ENCODE measurements at regions of chr17 and their contacts with region 1.

Region 1: GRCh38 chr17:27236717-27237315 is 57.1 kb upstream of the WSB1 start:
- DNase-seq: peak; percentile 90
- H3K4me3 Mint-ChIP-seq: no peak overlapping the region
- H3K27ac Mint-ChIP-seq: no peak overlapping the region
- H3K4me1 Mint-ChIP-seq: peaks cover 13% of the 10 kb centered on the region
- H3K27me3 Mint-ChIP-seq: no peaks in the 10 kb centered on the region

Region 2: DNA sequence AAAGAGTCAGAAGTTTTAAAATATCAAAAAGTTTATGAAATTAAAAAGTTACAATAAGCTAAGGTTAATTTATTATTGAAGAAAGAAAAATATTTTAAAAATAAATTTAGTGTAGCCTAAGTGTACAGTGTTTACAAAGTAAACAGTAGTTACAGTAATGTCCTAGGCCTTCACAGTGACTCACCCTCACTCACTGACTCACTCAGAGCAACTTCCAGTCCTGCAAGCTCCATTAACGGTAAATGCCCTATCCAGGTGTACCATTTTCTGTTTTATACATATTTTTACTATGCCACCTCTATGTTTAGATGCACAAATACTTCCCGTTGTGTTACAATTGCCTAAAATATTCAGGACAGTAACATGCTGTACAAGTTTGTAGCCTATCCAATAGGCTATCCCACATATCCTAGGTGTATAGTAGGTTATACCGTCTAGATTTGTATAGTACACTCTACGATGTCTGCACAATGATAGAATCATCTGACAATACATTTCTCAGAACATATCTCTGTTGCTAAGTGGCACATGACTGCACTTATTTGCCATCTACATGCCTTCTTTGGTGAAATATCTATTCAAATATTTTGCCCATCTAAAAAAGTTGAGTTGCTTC is 10.1 kb before region 1 on chr17:
- CTCF ChIA-PET with region 1: interaction called, 15 read pairs
- intact Hi-C with region 1: no loop called
- DNase-seq: no peak
- H3K4me3 Mint-ChIP-seq: no peak overlapping the region
- H3K27ac Mint-ChIP-seq: no peak overlapping the region
- H3K4me1 Mint-ChIP-seq: no peaks in the 10 kb centered on the region
- H3K27me3 Mint-ChIP-seq: no peaks in the 10 kb centered on the region

Region 3: DNA sequence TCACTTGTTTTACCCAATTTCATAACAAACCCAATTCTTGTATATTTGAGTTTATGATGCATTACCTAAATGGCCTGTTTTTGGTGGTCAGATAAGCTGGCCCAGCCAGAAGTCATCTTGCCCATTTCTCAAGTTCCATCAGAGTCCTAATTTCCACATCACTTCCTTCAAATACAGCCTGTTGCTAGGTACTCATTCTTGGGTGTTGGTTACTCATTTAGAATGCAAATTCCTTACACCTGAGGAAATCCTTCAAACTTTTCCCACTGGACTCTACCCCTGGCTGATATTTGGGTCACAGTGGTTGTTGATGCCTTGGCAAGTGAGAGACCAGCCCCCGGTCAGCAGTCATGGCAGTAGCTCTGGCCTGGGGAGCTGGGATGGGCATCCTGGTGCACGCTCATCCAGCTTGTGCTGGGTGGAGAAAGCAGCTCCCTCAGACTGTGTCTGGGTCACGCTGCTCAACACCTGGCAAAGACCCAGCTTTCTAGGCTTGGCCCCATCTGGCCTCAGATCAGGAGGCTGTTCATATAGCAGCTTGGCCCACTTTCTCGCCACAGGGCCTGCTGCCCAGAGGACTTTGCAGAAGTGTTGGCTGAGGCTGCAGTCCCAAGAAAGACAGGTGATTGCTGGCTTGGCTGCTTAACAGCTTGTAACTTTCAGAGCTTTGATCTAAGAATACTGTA is 82.9 kb after region 1 on chr17:
- CTCF ChIA-PET with region 1: interaction called, 10 read pairs
- intact Hi-C with region 1: no loop called
- DNase-seq: no peak
- H3K4me3 Mint-ChIP-seq: no peak overlapping the region
- H3K27ac Mint-ChIP-seq: no peak overlapping the region
- H3K4me1 Mint-ChIP-seq: no peaks in the 10 kb centered on the region
- H3K27me3 Mint-ChIP-seq: no peaks in the 10 kb centered on the region

Region 4: DNA sequence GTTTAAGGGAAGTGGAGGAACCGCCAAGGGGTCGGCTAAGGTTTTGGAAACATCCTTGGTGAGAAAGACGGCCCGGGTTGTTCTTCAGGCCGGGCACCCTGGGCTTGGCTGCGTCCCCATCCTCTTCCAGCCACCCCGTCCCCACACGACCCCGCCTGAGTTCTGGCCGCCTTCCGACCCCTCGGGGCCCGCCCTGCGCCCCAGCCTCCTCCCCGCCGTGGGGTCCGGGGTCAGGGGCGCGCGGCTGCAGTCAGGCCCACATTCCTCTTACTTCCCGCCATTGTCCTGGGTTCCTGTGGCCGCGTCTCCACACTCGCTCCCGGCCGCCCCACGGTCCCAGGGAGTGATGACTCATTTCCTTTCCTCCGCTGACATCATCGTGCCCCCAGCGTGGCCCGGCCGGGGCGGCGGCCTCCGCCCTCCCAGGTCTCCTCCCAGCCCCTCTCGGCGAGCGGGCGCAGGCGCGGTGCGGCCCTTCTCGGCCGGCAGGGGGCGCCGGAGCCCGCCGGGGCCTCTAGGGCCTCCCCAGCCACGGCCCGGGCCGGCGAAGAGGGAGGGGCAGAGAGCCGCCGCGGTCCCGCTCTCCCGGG is 116.7 kb after region 1 on chr17:
- CTCF ChIA-PET with region 1: interaction called, 27 read pairs
- intact Hi-C with region 1: loop called (anchors 1 kb)
- DNase-seq: peak; percentile 86
- H3K4me3 Mint-ChIP-seq: peak overlapping the region; percentile 89
- H3K27ac Mint-ChIP-seq: peak overlapping the region; percentile 93
- H3K4me1 Mint-ChIP-seq: peaks cover 23% of the 10 kb centered on the region
- H3K27me3 Mint-ChIP-seq: no peaks in the 10 kb centered on the region

Region 5: DNA sequence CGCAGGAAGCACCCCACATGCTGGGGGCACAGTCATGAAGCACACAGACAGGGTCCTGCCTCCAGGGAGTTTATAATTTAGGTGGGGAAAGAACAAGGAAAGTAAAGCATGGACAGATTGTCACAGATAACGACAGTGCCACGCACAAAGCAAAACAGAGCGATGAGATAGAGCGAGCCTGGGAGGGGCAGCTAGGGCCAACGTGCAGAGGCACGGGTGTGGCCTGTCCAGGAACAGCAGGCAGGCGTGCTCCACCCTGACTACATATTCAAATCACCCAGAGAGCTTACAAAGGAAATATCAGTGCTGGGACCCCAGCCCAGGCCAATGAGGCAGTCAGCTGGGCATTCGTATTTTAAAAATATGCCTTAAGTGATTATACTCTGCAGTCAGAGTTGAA is 410.9 kb after region 1 on chr17:
- CTCF ChIA-PET with region 1: interaction called, 14 read pairs
- intact Hi-C with region 1: loop called (anchors 1 kb)
- DNase-seq: no peak
- H3K4me3 Mint-ChIP-seq: no peak overlapping the region
- H3K27ac Mint-ChIP-seq: no peak overlapping the region
- H3K4me1 Mint-ChIP-seq: no peaks in the 10 kb centered on the region
- H3K27me3 Mint-ChIP-seq: no peaks in the 10 kb centered on the region

Region 6: GRCh38 chr17:27760069-27760885 is 523.5 kb after region 1 on chr17:
- CTCF ChIA-PET with region 1: interaction called, 5 read pairs
- intact Hi-C with region 1: loop called (anchors 5 kb)
- DNase-seq: peak; percentile 83
- H3K4me3 Mint-ChIP-seq: no peak overlapping the region
- H3K27ac Mint-ChIP-seq: no peak overlapping the region
- H3K4me1 Mint-ChIP-seq: no peaks in the 10 kb centered on the region
- H3K27me3 Mint-ChIP-seq: no peaks in the 10 kb centered on the region